ENCODE measurements at regions of chr11 and their contacts with region 1.

Region 1: GRCh38 chr11:108647701-108648527 is 17.0 kb upstream of the DDX10 start:
- DNase-seq: peak; percentile 33
- H3K4me3 ChIP-seq: no peak overlapping the region
- H3K27me3 ChIP-seq: no peaks in the 10 kb centered on the region
- CTCF ChIP-seq: peak; percentile 93

Region 2: DNA sequence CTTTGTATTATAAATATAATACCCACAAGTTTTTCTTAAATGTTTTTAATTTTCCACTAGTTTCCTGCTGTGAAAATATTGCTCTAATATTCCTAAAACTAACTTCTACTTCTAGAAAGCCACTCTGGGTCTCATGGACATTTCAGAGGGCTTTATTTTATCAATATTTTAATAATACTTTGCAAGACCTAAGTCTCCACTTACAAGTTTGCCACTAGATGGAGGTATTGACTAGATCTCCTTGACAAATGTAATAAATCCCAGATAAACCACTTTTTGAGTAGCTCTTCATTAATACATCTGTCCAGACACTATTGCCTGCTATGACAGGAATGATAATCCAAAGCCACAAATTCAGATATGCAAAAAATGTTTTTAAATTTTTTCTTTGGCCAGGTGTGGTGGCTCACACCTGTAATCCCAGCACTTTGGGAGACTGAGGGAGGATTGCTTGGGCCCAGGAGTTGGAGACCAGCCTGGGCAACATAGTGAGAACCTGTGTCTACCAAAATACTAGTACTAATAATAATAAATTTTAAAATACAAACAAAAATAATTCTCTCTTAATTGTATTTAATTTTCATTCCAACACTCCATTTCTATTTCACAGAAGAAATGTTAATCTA is 530.1 kb before region 1 on chr11:
- CTCF ChIA-PET with region 1: interaction called, 15 read pairs
- POLR2A ChIA-PET with region 1: no interaction called
- DNase-seq: no peak
- H3K4me3 ChIP-seq: no peak overlapping the region
- H3K27me3 ChIP-seq: no peaks in the 10 kb centered on the region
- CTCF ChIP-seq: peak; percentile 54

Region 3: DNA sequence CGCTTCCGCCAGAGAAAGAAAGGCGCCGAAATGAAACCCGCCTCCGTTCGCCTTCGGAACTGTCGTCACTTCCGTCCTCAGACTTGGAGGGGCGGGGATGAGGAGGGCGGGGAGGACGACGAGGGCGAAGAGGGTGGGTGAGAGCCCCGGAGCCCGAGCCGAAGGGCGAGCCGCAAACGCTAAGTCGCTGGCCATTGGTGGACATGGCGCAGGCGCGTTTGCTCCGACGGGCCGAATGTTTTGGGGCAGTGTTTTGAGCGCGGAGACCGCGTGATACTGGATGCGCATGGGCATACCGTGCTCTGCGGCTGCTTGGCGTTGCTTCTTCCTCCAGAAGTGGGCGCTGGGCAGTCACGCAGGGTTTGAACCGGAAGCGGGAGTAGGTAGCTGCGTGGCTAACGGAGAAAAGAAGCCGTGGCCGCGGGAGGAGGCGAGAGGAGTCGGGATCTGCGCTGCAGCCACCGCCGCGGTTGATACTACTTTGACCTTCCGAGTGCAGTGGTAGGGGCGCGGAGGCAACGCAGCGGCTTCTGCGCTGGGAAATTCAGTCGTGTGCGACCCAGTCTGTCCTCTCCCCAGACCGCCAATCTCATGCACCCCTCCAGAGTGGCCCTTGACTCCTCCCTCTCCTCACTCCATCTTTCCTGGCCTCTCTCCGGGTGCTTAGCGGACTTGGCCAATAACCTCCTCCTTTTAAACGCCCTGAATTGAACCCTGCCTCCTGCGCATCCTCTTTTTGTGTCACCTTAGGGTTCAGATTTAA is 425.0 kb before region 1 on chr11 and contains the start of gene ATM:
- CTCF ChIA-PET with region 1: interaction called, 20 read pairs
- POLR2A ChIA-PET with region 1: interaction called, 3 read pairs
- DNase-seq: peak; percentile 98
- H3K4me3 ChIP-seq: peak within 1 kb of the TSS; percentile 75
- H3K27me3 ChIP-seq: no peaks in the 10 kb centered on the region
- CTCF ChIP-seq: peak; percentile 90
- polyA plus RNA-seq, gene ATM: 12.8 and 27.6 TPM in 2 replicates

Measured in BJ (cell line).